ENCODE measurements at regions of chr10 and their contacts with region 1.

Region 1: DNA sequence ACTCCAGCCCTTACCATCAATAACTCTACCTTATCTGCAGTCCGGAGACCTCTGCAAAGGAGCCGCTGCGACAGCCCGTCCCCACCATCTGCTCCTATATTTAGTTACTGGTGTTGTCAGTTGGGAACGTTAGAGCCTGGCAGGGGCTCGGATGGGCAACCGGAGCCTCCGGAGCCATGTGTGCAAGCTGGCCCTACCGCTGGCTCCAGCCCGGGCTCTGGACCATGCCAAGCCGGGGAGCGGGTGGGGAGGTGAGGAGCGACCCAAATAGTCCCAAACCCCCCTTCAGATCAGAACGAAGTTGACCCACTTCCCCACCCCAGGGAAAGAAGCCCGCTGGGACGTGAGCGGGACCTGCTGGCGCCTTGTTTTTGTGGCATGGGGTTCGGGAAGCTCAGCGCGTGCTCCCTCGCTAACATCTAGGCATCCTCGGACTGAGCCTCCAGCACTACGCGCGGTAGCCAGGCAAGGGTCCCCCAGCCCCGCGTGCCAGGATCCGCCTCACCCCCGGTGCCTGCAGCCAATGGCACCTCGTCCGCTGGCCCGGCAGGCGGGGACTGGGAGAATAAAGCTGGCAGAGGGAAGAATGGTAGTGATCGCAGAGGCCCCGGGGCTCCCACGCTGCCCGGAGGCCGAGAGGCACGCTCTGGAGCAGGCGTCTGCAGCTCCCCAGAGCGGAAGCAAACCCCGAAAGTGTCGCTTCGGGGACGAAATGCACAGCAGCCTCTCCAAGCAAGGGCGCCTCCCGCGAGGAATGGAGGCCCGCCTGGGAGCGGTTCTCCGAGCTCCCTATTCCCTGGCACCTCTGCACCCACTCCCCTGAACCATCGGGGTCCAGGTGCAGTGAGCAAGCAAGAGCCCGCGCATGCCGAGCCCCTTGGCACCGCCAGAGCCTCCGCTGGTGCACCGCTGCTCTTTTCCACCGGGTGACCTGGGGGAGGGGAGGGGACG is 679 bp downstream of the LRRC20 start:
- H3K4me3 Mint-ChIP-seq: peak overlapping the region; percentile 80
- H3K27ac Mint-ChIP-seq: peak overlapping the region; percentile 73
- H3K4me1 Mint-ChIP-seq: peaks cover 17% of the 10 kb centered on the region
- H3K27me3 Mint-ChIP-seq: peaks cover 32% of the 10 kb centered on the region

Region 2: DNA sequence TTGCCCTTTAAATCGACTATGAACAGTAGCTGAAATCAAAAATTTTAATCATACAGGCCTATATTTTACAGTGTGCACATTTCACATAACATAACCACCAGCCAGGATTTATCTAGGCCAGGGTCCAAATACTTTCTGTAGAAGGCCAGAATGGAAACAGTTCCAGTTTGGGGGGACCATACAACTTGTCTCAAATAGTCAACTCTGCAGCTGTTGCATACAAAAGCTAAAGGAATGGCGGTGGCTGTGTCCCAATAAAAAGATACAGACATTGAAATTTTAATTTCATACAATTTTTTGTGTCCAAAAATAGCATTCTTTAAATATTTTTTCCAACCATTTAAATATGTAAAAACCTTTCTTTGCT is 234.5 kb before region 1 on chr10:
- intact Hi-C with region 1: no loop called
- H3K4me3 Mint-ChIP-seq: no peak overlapping the region
- H3K27ac Mint-ChIP-seq: peak overlapping the region; percentile 90
- H3K4me1 Mint-ChIP-seq: peaks cover 21% of the 10 kb centered on the region
- H3K27me3 Mint-ChIP-seq: no peaks in the 10 kb centered on the region

Region 3: DNA sequence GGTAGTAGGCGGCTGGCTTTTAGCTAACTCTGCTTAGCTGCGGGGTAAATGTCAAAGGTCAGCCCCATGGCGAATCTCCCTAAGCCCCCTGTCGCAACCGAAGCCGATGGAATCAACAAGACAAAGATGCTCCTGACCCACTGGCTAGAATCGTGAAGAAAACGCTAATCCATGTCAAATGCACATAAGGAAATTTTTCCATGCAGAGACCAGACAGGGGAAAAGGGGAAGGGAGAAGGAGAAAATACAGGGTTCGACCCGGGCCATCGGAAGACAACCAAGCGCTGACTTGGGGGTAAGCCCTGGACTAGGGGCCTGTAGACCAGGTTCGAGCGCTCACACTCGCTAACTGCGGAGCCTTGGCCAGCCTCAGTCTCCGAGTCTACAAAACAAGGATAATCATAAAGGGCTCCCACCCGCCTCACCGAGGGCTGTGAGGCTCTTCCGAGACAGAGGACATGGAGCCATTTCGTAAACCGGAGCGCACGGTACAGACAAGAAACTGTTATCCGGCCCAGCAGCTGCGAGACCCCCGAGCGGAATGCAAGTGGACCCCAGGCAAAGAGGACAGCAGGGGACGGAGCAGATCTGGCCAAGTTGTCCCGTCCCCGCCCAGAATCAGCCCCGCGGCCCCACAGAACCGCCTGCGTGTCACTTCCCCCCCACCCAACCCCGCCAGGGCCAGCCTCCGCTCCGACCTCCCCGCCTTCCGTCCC is 211.9 kb before region 1 on chr10:
- intact Hi-C with region 1: loop called (anchors 5 kb)
- H3K4me3 Mint-ChIP-seq: peak overlapping the region; percentile 88
- H3K27ac Mint-ChIP-seq: peak overlapping the region; percentile 97
- H3K4me1 Mint-ChIP-seq: peaks cover 48% of the 10 kb centered on the region
- H3K27me3 Mint-ChIP-seq: no peaks in the 10 kb centered on the region

Region 4: DNA sequence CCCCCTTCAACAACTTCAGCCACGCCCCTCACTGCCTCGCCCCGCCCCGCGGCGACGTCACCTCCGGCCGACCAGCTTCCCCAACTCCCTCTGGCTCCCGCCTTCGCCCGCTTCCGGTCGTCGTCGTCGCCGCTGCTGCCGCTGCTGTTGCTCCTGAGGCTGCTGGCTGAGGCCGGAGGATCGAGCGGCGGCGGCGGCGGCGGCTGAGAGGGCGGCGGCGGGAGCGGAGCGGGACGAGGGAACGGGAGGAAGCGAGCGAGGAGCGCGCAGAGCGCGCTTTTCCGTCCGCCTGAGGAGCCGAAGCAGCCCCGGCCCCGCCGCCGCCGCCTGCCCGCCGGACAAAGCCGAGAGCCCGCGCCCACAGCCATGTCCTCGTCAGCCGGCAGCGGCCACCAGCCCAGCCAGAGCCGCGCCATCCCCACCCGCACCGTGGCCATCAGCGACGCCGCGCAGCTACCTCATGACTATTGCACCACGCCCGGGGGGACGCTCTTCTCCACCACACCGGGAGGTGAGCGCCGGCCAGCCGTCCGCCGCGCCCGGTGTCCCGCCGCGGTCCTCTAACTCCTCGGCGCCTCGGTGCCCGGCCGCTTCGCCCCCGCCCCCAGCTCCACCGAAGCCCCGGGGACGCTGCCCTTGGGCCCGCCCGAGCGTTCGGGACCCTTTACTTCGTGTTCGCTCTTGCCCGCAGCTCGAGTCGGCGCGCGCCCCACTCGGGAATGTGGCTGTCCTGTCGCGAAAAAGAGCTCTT is 22.5 kb after region 1 on chr10 and contains the start of gene EIF4EBP2:
- intact Hi-C with region 1: loop called (anchors 1 kb)
- H3K4me3 Mint-ChIP-seq: peak within 1 kb of the TSS; percentile 97
- H3K27ac Mint-ChIP-seq: peak within 1 kb of the TSS; percentile 95
- H3K4me1 Mint-ChIP-seq: peaks cover 40% of the 10 kb centered on the region
- H3K27me3 Mint-ChIP-seq: no peaks in the 10 kb centered on the region

Region 5: DNA sequence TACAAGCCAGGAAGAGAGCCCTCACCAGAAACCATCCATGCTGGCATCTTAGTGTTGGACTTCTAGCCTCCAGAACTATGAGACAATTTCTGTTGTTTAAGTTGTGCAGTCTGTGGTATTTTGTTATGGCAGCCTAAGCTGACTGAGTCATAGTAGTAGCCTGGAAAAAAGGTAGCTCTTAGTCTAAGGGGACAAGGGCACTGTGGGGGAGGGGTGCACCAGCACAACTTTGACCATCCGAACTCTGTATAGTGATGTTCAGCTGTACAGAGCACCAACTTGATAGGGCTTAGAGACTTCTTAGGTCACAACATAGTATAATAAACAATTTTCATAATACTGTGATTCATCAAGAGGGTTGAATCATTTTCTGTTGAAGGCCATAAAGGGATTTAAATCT is 36.5 kb after region 1 on chr10:
- intact Hi-C with region 1: no loop called
- H3K4me3 Mint-ChIP-seq: no peak overlapping the region
- H3K27ac Mint-ChIP-seq: no peak overlapping the region
- H3K4me1 Mint-ChIP-seq: peaks cover 11% of the 10 kb centered on the region
- H3K27me3 Mint-ChIP-seq: no peaks in the 10 kb centered on the region

Region 6: GRCh38 chr10:70430493-70431445 is 49.0 kb after region 1 on chr10:
- intact Hi-C with region 1: no loop called
- H3K4me3 Mint-ChIP-seq: no peak overlapping the region
- H3K27ac Mint-ChIP-seq: no peak overlapping the region
- H3K4me1 Mint-ChIP-seq: peaks cover 6% of the 10 kb centered on the region
- H3K27me3 Mint-ChIP-seq: peaks cover 3% of the 10 kb centered on the region

Measured in dendritic cell treated with granulocyte-macrophage colony-stimulating factor and Interleukin-4, amounts not matched to agents 40 ng/mL and 50 ng/mL, for 4 days (primary cell).